ENCODE measurements at regions of chr5 and their contacts with region 1.

Region 1: DNA sequence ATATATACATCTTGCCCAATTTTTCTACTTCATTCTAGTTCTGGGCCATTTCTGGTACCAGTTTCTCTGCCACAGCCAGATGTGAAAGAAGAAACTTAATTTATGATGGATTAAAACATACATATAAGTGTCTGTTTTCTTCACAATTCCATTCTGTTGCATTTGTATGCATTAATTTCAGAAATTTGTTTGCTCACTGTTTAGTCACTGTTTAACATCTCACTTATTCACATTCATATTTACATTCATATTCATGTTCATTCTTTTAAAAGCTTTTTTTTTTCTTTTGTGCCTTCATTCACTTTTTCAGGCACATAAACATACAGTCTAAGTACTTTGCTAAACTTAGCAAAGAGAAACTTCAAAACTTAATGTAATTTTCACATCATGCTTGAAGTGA is 684.0 kb upstream of the CDH9 start:
- DNase-seq: no peak
- H3K4me3 ChIP-seq: no peak overlapping the region
- H3K27ac ChIP-seq: no peak overlapping the region
- H3K4me1 ChIP-seq: no peaks in the 10 kb centered on the region
- H3K27me3 ChIP-seq: no peaks in the 10 kb centered on the region
- CTCF ChIP-seq: no peak
- POLR2A ChIP-seq: no peak

Region 2: DNA sequence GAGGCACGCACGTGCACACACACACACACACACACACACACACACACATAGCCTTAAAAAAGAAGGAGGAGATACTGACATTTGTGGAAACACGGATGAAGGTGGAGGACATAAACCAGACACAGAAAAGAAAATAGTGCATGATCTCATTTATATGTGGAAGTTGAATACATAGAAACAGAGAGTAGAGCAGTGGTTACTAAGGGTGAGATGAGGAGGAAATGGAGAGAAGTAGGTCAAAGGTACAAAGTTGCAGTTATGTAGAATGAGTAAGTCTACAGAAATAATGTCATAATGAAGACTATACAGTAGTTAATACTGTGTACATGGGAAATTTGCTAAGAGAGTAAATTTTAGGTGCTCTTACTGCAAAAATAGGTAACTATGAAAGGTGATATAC is 271.7 kb before region 1 on chr5:
- intact Hi-C with region 1: loop called (anchors 5 kb)
- DNase-seq: no peak
- H3K4me3 ChIP-seq: no peak overlapping the region
- H3K27ac ChIP-seq: no peak overlapping the region
- H3K4me1 ChIP-seq: no peaks in the 10 kb centered on the region
- H3K27me3 ChIP-seq: no peaks in the 10 kb centered on the region
- CTCF ChIP-seq: no peak
- POLR2A ChIP-seq: no peak

Region 3: GRCh38 chr5:27674041-27674440 is 48.3 kb before region 1 on chr5:
- intact Hi-C with region 1: no loop called
- DNase-seq: no peak
- H3K4me3 ChIP-seq: no peak overlapping the region
- H3K27ac ChIP-seq: no peak overlapping the region
- H3K4me1 ChIP-seq: no peaks in the 10 kb centered on the region
- H3K27me3 ChIP-seq: no peaks in the 10 kb centered on the region
- CTCF ChIP-seq: no peak
- POLR2A ChIP-seq: no peak

Region 4: DNA sequence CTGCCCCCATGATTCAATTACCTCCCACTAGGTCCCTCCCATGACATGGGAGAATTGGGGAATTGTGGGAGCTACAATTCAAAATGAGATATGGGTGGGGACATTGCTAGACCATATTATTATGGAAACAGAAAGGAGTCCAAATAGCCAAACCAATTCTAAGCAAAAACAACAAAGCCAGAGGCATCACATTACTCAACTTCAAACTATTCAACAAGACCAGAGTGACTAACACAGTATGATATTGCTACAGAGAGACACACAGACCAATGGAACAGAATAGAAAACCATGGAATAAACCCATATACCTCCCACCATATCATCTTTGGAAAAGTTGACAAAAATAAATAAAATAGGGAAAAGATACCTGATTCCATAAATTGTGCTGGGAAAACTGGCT is 26.5 kb after region 1 on chr5:
- intact Hi-C with region 1: no loop called
- DNase-seq: no peak
- H3K4me3 ChIP-seq: no peak overlapping the region
- H3K27ac ChIP-seq: no peak overlapping the region
- H3K4me1 ChIP-seq: no peaks in the 10 kb centered on the region
- H3K27me3 ChIP-seq: no peaks in the 10 kb centered on the region
- CTCF ChIP-seq: no peak
- POLR2A ChIP-seq: no peak